Left lung (tissue), 14 donors: ENCODE measurements at regions of chr10 and their contacts with region 1.

Region 1: DNA sequence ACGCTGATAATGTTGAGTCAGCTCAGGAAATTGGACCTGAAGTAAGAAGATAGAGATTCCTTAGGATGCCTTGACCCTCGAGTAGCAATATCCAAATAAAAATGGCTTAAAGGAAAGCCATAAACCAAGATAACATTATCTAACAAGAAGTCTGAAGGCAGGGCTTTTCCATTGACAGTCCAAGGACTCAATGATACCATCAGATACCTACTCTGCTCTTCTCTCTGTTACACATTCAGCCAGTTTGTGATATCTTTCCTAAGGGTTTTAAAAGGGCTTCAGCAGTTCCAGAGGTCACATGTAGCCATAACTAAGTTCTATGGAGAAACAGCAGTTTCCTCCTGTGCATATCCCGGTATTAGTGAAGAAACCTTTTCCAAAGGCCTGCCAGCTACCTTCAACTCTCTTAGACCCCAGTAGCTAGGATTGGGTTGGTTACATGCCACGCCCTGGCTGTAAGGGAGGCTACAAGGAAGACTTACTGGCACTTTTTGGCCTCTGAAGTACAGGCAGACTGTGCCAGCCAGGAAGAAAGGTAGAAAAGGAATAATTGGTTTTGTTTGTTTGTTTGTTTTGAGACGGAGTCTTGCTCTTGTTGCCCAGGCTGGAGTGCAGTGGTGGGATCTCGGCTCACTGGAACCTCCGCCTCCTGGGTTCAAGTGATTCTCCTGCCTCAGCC is 10.6 kb downstream of the SHLD2 start:
- DNase-seq: no peak
- ATAC-seq: no peak
- H3K4me3 ChIP-seq: no peak overlapping the region
- H3K27ac ChIP-seq: no peak overlapping the region
- H3K4me1 ChIP-seq: no peaks in the 10 kb centered on the region
- H3K27me3 ChIP-seq: no peaks in the 10 kb centered on the region
- CTCF ChIP-seq: no peak

Region 2: DNA sequence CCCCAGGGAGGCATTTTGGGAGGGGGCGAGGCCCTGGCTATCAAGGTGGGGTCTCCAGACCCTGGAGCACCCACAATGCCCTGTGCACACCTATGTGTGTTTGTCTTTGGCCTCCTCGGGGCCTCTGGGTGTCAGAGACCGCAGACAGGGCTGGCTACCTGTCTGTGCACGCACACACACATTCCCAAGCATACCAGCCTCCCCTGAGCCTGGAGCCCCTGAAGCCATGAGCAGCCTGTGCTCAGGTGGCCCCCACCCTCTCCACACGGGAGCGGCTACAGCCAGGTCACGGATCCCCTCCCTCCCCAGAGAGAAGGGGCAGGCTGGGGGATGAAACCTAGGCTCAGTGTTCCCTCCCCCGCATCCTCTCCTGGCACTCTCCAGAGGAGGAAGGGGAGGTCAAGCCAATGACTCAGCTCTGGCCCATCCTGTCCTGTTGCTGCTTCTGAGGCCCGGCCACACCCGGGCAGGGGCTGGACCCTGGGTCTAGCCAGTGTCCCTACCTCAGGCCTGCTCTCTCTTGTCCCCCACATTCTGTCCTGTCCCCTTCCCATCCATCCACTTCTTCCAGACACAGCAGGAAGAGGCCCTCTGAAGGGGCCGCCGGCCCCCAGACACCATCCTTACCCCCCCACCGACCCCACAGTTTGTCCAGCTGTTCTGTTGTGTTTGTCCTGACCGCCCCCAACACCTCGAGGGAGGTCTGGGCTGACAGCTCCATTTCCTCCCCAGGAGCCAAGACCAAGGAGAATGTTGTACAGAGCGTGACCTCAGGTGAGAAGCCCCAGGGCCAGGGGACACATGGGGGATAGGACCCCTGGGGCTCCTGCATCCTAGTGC is 146.5 kb before region 1 on chr10:
- intact Hi-C with region 1: loop called in 1 of 2 experiments (anchors 10 kb)
- DNase-seq: no peak
- ATAC-seq: peak; percentile 64
- H3K4me3 ChIP-seq: peak overlapping the region in 1 of 2 donors; percentile 41
- H3K27ac ChIP-seq: peak overlapping the region; percentile 44 to 64
- H3K4me1 ChIP-seq: peaks cover 22 to 37% of the 10 kb centered on the region in 2 donors
- H3K27me3 ChIP-seq: peaks cover 0 to 4% of the 10 kb centered on the region in 2 donors
- CTCF ChIP-seq: no peak

Region 3: DNA sequence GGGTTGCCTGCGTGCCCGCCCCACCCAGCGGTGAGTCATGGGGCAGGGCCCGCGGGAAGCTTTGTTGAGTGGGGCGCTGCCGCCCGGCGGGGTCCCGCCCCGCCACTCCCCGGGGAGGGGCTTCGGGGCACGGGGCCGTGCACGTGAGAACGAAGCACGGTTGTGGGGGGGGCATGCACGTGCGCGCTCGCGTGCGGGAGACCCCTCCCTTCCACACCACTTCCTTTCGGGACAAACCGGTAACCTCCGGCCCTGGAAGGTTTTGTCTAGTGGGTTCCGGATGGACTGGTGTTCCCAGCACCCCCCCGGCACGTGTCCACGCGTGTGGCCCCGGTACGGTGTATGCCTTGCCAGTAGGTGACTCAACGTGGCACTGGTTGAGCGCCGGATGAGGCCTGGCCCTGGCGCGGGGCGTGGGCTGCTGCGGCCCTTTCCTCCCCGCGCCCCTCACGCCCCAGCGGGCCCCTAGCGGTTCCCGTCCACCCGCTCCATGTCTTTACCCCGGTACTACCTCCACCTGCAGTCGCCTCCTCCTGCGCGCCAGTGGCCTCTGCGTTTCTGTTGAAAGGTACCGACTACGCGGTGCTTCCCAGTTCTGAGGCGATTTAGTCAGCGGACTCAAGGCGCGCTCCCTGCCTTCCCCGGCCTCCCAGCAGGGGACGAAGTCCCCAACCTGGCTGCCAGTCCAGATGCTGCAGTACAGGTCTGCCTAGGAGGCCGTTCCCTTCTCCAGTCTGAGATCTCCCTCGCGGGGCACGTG is 134.2 kb before region 1 on chr10:
- intact Hi-C with region 1: no loop called
- DNase-seq: peak; percentile 89 to 95 (median 92)
- ATAC-seq: peak; percentile 87
- H3K4me3 ChIP-seq: peak overlapping the region; percentile 52 to 56
- H3K27ac ChIP-seq: peak overlapping the region; percentile 89 to 92
- H3K4me1 ChIP-seq: peaks cover 28 to 50% of the 10 kb centered on the region in 2 donors
- H3K27me3 ChIP-seq: peaks cover 0 to 49% of the 10 kb centered on the region in 2 donors
- CTCF ChIP-seq: no peak